Activated CD4-positive, alpha-beta T cell treated with anti-CD3 and anti-CD28 coated beads, Interleukin-2, amount 10 ng/mL, durations not matched to agents 24 days and 14 days (primary cell): ENCODE measurements at regions of chr6 and their contacts with region 1.

Region 1: GRCh38 chr6:156009656-156010055 is 554.0 kb upstream of the NOX3 start:
- DNase-seq: no peak
- H3K4me3 Mint-ChIP-seq: no peak overlapping the region
- H3K27ac Mint-ChIP-seq: no peak overlapping the region
- H3K4me1 Mint-ChIP-seq: peaks cover 5% of the 10 kb centered on the region
- H3K27me3 Mint-ChIP-seq: no peaks in the 10 kb centered on the region

Region 2: DNA sequence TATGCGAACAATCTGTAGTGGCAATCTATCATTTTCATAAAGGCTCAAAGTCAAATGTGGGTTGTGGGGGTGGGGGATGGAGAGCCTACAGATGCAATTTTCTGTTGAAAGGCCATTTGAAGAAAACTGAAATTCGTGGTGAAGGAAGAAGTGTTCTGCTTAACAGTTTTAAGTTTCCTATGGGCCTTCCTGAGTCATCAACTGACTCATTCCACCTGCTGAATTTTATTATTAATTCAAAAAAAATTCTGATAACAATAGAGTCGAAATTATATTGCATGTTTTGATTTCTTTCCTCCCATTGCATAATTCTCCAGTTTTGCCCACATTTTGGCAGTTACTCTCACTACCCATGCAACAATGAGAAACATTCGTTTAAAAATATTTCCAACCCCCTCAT is 145.2 kb after region 1 on chr6:
- intact Hi-C with region 1: loop called (anchors 10 kb)
- DNase-seq: no peak
- H3K4me3 Mint-ChIP-seq: no peak overlapping the region
- H3K27ac Mint-ChIP-seq: no peak overlapping the region
- H3K4me1 Mint-ChIP-seq: peaks cover 9% of the 10 kb centered on the region
- H3K27me3 Mint-ChIP-seq: no peaks in the 10 kb centered on the region